Transverse colon (tissue), 4 donors: ENCODE measurements at regions of chr22 and their contacts with region 1.

Region 1: GRCh38 chr22:47616396-47617020 is 854.1 kb downstream of the TBC1D22A start:
- DNase-seq: no peak
- H3K4me3 ChIP-seq: no peak overlapping the region
- H3K27ac ChIP-seq: no peak overlapping the region
- H3K4me1 ChIP-seq: no peaks in the 10 kb centered on the region
- H3K27me3 ChIP-seq: no peaks in the 10 kb centered on the region
- CTCF ChIP-seq: no peak
- EP300 ChIP-seq: no peak
- POLR2A ChIP-seq: no peak

Region 2: GRCh38 chr22:47270463-47271135 is 345.9 kb before region 1 on chr22:
- in situ Hi-C with region 1: no loop called
- intact Hi-C with region 1: no loop called
- DNase-seq: no peak
- H3K4me3 ChIP-seq: no peak overlapping the region
- H3K27ac ChIP-seq: no peak overlapping the region
- H3K4me1 ChIP-seq: no peaks in the 10 kb centered on the region
- H3K27me3 ChIP-seq: no peaks in the 10 kb centered on the region
- CTCF ChIP-seq: no peak
- EP300 ChIP-seq: no peak
- POLR2A ChIP-seq: no peak

Region 3: GRCh38 chr22:47550524-47551430 is 65.7 kb before region 1 on chr22:
- in situ Hi-C with region 1: no loop called
- intact Hi-C with region 1: loop called (anchors 2 kb)
- DNase-seq: no peak
- H3K4me3 ChIP-seq: no peak overlapping the region
- H3K27ac ChIP-seq: no peak overlapping the region
- H3K4me1 ChIP-seq: no peaks in the 10 kb centered on the region
- H3K27me3 ChIP-seq: no peaks in the 10 kb centered on the region
- CTCF ChIP-seq: no peak
- EP300 ChIP-seq: no peak
- POLR2A ChIP-seq: no peak